Activated CD4-positive, alpha-beta memory T cell treated with anti-CD3 and anti-CD28 coated beads for 36 hours (primary cell): ENCODE measurements at regions of chr10 and their contacts with region 1.

Region 1: DNA sequence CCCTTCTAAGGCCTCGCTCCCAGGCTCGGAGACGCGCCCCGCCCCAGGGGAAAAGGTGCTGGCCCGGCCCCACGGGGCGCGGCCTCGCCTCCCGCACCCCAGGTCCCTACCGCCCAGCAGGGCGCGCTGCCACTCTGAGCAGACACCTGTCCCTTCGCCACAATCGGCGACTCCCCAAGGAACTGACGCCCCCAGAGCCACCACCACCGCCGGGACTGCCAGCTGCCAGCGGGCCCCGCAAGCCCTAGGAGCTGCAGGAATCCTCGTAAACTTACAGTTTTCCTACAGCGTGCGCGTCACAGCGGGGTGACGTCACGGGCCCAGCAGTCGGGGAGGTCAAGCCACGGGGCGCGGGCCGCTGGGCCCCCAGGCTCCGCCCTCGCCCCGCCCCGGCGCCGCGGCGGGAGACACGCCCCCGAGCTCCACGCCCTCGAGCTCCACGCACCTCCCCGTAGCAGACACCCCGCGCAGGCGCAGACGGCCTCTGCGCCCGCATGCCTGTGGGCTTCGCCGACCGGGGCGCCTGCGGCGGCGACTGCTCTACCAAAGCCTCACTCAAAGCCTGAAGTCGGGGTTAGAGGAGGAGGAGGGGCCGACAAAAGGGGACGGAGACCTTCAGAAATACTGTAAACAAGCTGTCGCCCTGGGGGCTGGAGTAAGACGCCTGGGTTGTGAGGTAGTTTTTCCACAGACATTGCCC is at the start of gene ZNF438:
- DNase-seq: peak; percentile 96
- H3K4me3 Mint-ChIP-seq: peak within 1 kb of the TSS; percentile 86
- H3K27ac Mint-ChIP-seq: peak within 1 kb of the TSS; percentile 96
- H3K4me1 Mint-ChIP-seq: peaks cover 13% of the 10 kb centered on the region
- H3K27me3 Mint-ChIP-seq: no peaks in the 10 kb centered on the region
- total RNA-seq, gene ZNF438: 3.7 TPM

Region 2: DNA sequence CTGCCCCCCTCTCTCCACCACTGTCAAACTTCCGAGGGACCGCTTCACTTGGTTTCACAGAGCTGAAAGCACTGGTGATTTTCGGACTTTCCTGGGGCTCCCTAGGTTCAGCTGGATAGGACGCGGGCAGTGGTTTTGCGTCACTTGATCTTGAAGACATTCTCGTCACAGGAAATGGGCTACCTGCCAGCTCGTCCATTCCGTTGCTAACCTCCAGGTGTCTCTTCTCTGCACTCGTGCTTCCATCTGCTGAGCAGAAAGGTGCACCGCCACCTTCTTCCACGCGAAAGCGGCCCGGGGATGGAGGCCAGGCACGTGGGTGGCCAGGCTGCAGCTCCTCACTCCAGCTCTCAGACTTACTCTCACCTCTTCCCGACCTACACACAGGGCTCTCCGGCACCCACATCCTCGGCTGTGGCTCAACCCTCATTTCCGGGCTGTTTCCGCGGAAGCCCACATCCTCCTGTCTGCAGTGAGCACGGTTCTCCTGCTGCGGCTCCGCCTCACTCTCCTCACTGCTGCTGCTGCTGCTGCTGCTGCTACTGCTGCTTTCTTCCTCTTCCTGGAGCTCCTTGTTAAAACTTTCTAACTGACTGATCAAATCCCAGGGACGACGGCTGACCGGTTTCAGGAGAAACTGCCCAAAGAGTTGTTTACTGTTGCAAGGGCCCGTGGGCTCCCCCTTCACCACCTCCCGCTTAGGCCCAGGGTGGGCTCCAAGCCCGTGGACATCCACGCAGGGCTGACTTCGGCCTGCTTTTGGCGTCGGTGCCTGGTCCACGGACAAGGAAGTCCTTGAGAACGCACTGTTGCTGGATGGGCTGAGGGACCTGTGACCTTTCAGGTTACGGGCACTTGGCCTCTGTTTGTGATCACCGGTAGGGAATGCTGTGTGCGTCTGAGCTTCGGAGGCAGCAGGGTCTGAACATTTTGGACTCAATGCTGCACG is 1004.4 kb before region 1 on chr10:
- CTCF ChIA-PET with region 1: no interaction called
- POLR2A ChIA-PET with region 1: no interaction called
- intact Hi-C with region 1: loop called (anchors 2 kb)
- DNase-seq: peak; percentile 95
- H3K4me3 Mint-ChIP-seq: peak overlapping the region; percentile 67
- H3K27ac Mint-ChIP-seq: peak overlapping the region; percentile 65
- H3K4me1 Mint-ChIP-seq: peaks cover 40% of the 10 kb centered on the region
- H3K27me3 Mint-ChIP-seq: peaks cover 47% of the 10 kb centered on the region

Region 3: GRCh38 chr10:30999070-30999712 is 32.5 kb before region 1 on chr10:
- CTCF ChIA-PET with region 1: interaction called, 5 read pairs
- POLR2A ChIA-PET with region 1: interaction called, 10 read pairs
- intact Hi-C with region 1: no loop called
- DNase-seq: peak; percentile 43
- H3K4me3 Mint-ChIP-seq: peak overlapping the region; percentile 56
- H3K27ac Mint-ChIP-seq: peak overlapping the region; percentile 71
- H3K4me1 Mint-ChIP-seq: peaks cover 41% of the 10 kb centered on the region
- H3K27me3 Mint-ChIP-seq: no peaks in the 10 kb centered on the region

Region 4: GRCh38 chr10:31042670-31043069 is 11.0 kb after region 1 on chr10:
- CTCF ChIA-PET with region 1: no interaction called
- POLR2A ChIA-PET with region 1: no interaction called
- intact Hi-C with region 1: no loop called
- DNase-seq: no peak
- H3K4me3 Mint-ChIP-seq: no peak overlapping the region
- H3K27ac Mint-ChIP-seq: no peak overlapping the region
- H3K4me1 Mint-ChIP-seq: peaks cover 2% of the 10 kb centered on the region
- H3K27me3 Mint-ChIP-seq: peaks cover 7% of the 10 kb centered on the region

Region 5: DNA sequence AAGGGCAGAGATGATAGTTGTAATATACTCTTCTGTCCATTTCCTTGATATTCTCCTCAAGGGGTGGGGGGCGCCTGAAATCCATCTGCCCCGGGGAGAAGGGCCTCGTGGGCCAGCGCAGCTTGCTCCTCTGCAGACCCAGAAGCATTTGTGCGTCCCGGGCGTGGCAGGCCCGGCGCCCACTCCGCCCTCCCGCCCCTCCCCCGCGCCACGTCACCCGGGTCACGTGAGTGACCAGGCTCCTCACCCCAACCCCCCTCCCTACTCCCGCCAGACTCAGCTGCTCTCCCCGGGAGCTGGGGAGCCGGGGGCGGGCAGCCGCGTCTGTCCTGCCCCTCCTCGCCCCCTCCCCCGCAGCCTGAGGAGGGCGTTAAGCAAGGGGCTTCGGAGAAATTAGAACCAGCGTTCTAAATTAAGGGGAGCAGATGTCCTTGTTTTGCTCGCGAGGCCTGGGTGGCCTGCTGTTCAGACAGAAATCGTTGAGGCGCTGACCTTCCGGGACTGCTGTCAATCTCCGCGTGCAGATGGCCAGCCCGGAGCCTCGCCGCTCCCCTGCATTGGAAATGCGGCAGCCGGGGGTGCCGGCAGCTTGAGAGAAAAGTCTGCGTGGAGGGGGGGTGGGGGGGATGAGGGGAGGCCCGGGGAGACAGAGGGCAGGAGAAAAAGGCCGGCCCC is 102.1 kb after region 1 on chr10:
- CTCF ChIA-PET with region 1: no interaction called
- POLR2A ChIA-PET with region 1: interaction called, 3 read pairs
- intact Hi-C with region 1: loop called (anchors 5 kb)
- DNase-seq: peak; percentile 83
- H3K4me3 Mint-ChIP-seq: peak overlapping the region; percentile 65
- H3K27ac Mint-ChIP-seq: peak overlapping the region; percentile 62
- H3K4me1 Mint-ChIP-seq: peaks cover 42% of the 10 kb centered on the region
- H3K27me3 Mint-ChIP-seq: no peaks in the 10 kb centered on the region

Region 6: DNA sequence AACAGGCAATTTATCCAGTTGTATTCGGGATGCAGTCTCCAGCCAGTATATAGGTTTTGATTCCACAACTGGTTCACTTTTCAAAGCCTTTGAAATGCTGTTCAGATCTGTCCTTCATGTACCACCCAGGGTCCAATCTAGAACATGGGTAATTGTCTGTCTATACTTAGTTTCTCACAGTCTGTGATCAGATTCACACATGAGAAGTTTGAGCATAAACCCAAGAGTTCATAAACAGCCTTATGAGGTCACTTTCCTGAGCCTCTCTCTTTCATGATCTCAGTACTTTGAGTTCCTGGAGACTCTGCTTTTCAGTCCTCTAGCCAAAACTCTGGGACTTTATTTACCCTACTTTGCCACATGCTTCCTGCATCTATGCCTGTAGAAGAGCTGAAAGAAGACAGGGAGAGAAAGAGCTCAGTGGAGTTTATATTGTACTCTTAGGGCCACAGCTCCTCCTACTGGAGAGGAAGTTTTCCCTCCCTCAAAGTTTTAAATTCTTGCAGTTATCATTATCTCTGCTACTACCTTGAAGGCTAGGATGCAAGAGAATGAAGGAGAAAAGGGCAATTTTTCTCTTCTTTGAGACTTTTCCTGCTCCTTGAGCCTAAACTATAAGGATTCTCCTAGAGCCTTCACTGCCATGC is 459.3 kb after region 1 on chr10:
- CTCF ChIA-PET with region 1: interaction called, 3 read pairs
- POLR2A ChIA-PET with region 1: no interaction called
- intact Hi-C with region 1: loop called (anchors 1 kb)
- DNase-seq: no peak
- H3K4me3 Mint-ChIP-seq: no peak overlapping the region
- H3K27ac Mint-ChIP-seq: no peak overlapping the region
- H3K4me1 Mint-ChIP-seq: no peaks in the 10 kb centered on the region
- H3K27me3 Mint-ChIP-seq: no peaks in the 10 kb centered on the region

Region 7: GRCh38 chr10:31745612-31746376 is 714.1 kb after region 1 on chr10:
- CTCF ChIA-PET with region 1: no interaction called
- POLR2A ChIA-PET with region 1: interaction called, 3 read pairs
- intact Hi-C with region 1: loop called (anchors 5 kb)
- DNase-seq: peak; percentile 76
- H3K4me3 Mint-ChIP-seq: peak overlapping the region; percentile 38
- H3K27ac Mint-ChIP-seq: peak overlapping the region; percentile 95
- H3K4me1 Mint-ChIP-seq: peaks cover 38% of the 10 kb centered on the region
- H3K27me3 Mint-ChIP-seq: no peaks in the 10 kb centered on the region